Left cardiac atrium (tissue), 4 donors: ENCODE measurements at regions of chr20 and their contacts with region 1.

Region 1: GRCh38 chr20:41339507-41340326 is 904 bp upstream of the LPIN3 start:
- DNase-seq: peak; percentile 81
- ATAC-seq: peak; percentile 79 to 85

Region 2: GRCh38 chr20:40970201-40970600 is 369.5 kb before region 1 on chr20:
- intact Hi-C with region 1: loop called in 1 of 2 experiments (anchors 10 kb)
- DNase-seq: no peak
- ATAC-seq: no peak

Region 3: DNA sequence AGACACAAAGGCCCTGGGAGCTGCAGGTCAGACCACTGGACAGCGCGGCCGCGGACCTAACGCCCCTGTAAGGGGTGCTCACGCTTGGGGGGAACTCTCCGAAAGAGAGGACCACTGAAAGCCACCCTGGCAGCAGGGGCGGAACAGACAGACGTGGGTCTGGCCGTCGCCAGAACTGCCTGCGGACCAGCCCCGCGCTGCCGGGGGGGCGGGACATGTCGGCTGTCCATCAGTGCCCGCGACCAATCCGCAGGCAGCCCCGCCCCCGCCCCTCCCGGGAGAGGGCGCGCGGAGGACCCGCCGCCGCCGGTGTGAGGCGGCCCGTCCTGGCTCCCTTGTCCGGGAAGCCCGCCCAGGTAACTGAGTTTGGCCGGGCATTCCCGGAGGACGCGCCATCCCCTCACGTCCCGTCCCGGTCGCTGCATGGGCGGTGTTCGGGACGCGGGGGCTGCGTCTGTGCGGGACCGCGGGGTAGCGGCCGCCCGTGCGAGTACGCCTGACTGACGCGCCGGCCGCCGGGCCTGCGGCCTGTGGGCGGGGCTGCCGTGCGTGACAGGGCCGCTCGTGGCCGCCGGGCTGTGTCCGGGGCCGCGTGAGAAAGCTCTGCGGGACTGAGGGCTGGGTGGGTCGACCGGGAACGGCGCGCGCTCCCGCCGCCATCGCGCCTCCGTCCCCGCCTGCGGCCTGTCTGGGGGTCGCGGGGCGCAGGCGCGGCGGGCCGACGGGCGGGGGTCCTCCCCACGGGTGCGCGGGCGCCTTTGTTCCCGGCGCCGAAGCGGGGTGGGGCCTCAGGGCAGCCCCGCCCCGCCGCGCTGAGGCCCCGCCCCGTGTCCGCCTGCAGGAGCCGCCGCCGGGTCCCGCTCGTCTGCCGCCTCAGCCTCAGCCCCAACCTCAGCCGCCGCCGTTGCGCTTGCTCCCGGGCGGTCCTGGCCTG is 202.8 kb before region 1 on chr20 and contains the start of gene PLCG1:
- intact Hi-C with region 1: loop called in 1 of 2 experiments (anchors 5 kb)
- DNase-seq: peak; percentile 93
- ATAC-seq: peak; percentile 88 to 90
- total RNA-seq, gene PLCG1: 40.0 to 64.8 TPM

Region 4: GRCh38 chr20:41173161-41173721 is 166.5 kb before region 1 on chr20:
- intact Hi-C with region 1: loop called (anchors 1 to 2 kb)
- DNase-seq: peak; percentile 88
- ATAC-seq: peak; percentile 84 to 92

Region 5: GRCh38 chr20:41249406-41250281 is 90.1 kb before region 1 on chr20:
- intact Hi-C with region 1: loop called (anchors 5 to 10 kb)
- DNase-seq: peak; percentile 84
- ATAC-seq: peak; percentile 81 to 96